ENCODE measurements at regions of chr9 and their contacts with region 1.

Region 1: GRCh38 chr9:14652729-14653377 is 40.4 kb downstream of the ZDHHC21 start:
- DNase-seq: no peak
- H3K4me3 Mint-ChIP-seq: no peak overlapping the region
- H3K27ac Mint-ChIP-seq: no peak overlapping the region
- H3K4me1 Mint-ChIP-seq: no peaks in the 10 kb centered on the region
- H3K27me3 Mint-ChIP-seq: no peaks in the 10 kb centered on the region

Region 2: DNA sequence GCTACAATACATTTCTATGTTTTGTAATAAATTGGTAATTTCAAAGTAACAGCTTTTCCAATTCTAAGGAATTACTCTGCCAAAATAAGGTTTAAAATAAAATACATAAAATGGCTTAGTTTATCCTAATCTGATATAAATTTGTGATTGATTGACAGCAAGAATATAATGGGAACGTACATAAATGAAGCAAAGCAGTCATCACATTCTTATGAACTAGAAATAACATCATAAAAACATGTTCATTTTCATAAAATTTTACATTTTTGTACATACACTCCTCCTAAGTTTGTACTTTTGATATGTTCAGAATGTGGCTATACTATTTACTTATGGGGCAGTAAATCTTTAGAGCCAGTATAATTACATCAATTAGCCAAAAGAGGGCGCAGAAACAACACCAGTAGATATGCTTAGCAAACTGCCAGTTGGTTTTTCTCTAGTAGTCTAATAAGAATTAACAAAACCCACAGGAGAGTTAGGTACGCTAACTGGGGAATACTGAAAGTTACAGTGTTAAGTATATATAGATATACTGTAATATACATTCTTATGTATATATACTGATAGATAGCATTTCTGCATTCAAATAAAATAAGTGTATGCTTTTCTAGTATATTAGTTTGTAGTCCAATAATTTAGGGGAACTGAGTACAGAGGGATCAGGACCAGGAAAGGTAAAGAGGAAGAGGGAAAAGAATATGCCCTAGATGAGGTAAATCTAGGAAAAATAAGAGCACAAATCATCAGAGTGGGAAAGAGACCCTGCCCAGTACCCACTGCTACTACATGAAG is 36.5 kb before region 1 on chr9:
- intact Hi-C with region 1: loop called (anchors 5 kb)
- DNase-seq: no peak
- H3K4me3 Mint-ChIP-seq: no peak overlapping the region
- H3K27ac Mint-ChIP-seq: no peak overlapping the region
- H3K4me1 Mint-ChIP-seq: no peaks in the 10 kb centered on the region
- H3K27me3 Mint-ChIP-seq: no peaks in the 10 kb centered on the region